K562 (cell line): ENCODE measurements at regions of chr9 and their contacts with region 1.

Region 1: DNA sequence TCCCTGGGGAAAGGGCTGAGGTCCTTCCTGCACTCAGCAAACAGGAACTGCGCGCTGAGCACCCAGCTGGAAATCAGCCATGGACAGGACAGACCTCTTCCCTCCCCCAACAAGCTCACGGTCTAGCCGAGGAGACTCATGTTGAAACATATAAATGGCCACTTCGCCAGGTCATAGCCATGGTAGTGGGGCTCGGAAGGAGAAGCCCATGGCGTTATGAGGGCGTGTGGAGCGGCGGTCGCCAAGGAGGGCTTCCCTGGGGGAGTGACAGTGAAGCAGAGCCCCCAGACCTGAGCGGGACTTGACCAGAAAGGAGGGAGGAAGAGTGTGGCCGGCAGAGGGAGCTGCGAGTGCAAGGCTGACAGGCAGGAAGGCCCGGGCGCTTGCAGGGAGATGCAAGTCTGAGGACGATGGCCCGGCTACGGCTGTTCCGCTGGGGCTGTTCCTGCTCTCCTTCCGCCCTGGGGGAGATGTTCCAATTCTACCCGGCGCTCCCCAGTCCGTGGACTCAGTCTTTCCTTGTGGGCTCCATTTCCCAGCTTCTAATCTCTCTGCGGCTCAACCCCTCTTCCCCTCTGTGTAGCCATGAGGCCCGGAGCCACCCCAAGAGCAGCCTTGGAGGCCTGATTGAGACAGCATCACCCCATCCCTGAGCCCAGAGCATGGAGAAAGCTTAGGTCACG is 43.9 kb upstream of the PRRC2B start:
- DNase-seq: peak; percentile 82 to 90 (median 86)
- ATAC-seq: peak; percentile 99
- H3K4me3 ChIP-seq: peak overlapping the region; percentile 29
- H3K27ac ChIP-seq: no peak overlapping the region; the same call in 2 of the 3 replicates
- H3K4me1 ChIP-seq: peaks cover 3 to 25% of the 10 kb centered on the region in 2 experiments; a peak in 4 of 5 replicates
- H3K27me3 ChIP-seq: no peaks in the 10 kb centered on the region
- CTCF ChIP-seq: peak; percentile 90 to 91 (median 91)
- EP300 ChIP-seq: no peak
- POLR2A ChIP-seq: no peak
- RAD21 ChIP-seq: peak; percentile 86 to 93

Region 2: DNA sequence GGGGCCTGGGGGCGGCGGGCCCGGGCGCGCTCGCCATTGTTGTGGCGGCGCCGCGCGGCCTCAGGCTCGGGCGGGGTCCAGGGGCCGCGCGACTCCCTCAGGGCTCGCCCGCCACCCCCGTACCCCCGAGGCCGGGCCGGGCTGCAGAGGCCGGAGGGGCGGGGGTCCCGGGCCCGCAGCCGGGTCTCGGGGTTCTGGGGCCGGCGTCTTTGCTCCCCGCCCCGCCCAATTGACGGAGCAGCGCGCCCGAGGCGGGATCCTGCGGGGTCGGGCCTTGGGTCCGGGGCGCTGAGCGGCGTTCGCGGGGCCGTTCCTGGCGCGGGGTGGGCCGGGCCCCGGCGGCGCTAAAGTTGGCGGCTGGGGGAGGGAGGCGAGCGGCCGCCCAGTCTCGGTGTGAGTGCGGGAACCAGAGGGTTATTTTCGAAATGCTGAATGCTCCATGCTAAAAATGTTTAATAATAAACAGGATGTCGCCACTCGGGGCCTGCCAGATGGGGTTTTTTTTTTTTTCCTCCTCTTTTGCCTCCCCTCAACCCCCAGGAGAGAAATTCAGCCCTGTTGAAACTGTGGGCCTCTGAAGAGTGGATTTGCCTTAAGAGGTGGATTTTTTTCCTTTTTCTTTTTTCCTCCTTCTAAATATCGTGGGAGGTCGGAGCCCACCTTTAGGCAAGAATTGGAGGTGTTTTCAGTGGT is 44.6 kb after region 1 on chr9:
- CTCF ChIA-PET with region 1: interaction called, 3 read pairs
- POLR2A ChIA-PET with region 1: interaction called, 10 read pairs
- in situ Hi-C with region 1: no loop called
- intact Hi-C with region 1: no loop called
- DNase-seq: peak; percentile 64 to 85 (median 80)
- ATAC-seq: peak; percentile 70
- H3K4me3 ChIP-seq: peak overlapping the region; percentile 96
- H3K27ac ChIP-seq: peak overlapping the region; percentile 89
- H3K4me1 ChIP-seq: peaks cover 26 to 33% of the 10 kb centered on the region in 2 experiments
- H3K27me3 ChIP-seq: no peaks in the 10 kb centered on the region
- CTCF ChIP-seq: no peak
- EP300 ChIP-seq: no peak
- POLR2A ChIP-seq: no peak; the same call in 1 of the 2 replicates
- RAD21 ChIP-seq: no peak

Region 3: DNA sequence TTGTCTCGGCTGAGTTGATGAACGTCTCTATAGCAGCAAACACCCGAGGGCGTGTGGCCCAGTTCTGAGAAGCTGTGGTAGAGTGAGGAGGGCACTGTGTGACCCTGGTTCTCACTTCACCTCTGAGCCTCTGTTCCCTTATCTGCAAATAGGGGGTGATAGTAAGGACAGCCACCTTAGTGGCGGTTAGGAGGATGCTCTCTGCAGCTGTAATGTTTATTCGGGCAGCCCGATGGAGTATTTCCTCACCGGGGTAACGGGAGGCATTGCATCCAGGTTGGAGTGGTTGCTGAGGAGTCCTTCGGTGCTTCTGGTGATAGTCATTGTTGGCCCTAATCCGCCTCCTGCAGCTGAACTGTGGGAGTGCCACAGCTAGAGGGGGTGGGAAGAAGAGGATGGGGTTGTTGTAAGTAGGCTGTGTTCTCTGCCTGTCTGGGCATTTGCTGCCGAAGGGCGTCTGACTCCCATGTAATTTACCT is 57.7 kb after region 1 on chr9:
- CTCF ChIA-PET with region 1: interaction called, 8 read pairs
- POLR2A ChIA-PET with region 1: interaction called, 8 read pairs
- in situ Hi-C with region 1: no loop called
- intact Hi-C with region 1: loop called (anchors 5 kb)
- DNase-seq: peak; percentile 34 to 61 (median 48)
- ATAC-seq: peak; percentile 77
- H3K4me3 ChIP-seq: no peak overlapping the region
- H3K27ac ChIP-seq: no peak overlapping the region
- H3K4me1 ChIP-seq: peaks cover 37 to 40% of the 10 kb centered on the region in 2 experiments; a peak in 4 of 5 replicates
- H3K27me3 ChIP-seq: no peaks in the 10 kb centered on the region
- CTCF ChIP-seq: peak; percentile 45 to 57 (median 53); a peak in 5 of 6 replicates
- EP300 ChIP-seq: no peak
- POLR2A ChIP-seq: no peak
- RAD21 ChIP-seq: peak in 1 of 2 experiments; percentile 14; a peak in 1 of 4 replicates

Region 4: DNA sequence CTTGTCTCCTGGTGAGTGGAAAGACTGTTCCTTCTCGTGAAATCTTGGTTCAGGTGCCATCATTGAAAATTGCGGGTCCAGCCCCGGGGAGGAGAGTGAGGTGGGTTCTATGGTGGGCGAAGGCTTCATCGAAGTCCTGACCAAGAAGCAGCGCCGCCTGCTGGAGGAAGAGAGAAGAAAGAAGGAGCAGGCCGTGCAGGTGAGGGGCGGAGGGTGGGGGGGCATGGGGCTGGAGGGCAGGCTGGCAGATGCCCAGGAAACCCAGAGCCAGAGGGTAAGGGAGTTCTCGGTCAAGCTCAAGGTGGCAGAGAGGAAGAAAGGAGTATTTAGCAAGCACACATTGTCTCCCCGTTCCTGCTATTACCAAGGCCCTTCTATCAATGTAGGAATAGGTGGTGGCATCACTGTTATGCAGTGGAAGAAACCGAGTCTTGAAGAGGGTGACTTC is 128.4 kb after region 1 on chr9:
- CTCF ChIA-PET with region 1: interaction called, 12 read pairs
- POLR2A ChIA-PET with region 1: interaction called, 3 read pairs
- in situ Hi-C with region 1: loop called (anchors 10 kb)
- intact Hi-C with region 1: loop called (anchors 5 kb)
- DNase-seq: peak; percentile 45 to 67 (median 60)
- ATAC-seq: peak; percentile 77
- H3K4me3 ChIP-seq: no peak overlapping the region
- H3K27ac ChIP-seq: no peak overlapping the region
- H3K4me1 ChIP-seq: peaks cover 0 to 7% of the 10 kb centered on the region in 2 experiments; a peak in 1 of 5 replicates
- H3K27me3 ChIP-seq: no peaks in the 10 kb centered on the region
- CTCF ChIP-seq: peak; percentile 50 to 62 (median 55); a peak in 5 of 6 replicates
- EP300 ChIP-seq: no peak
- POLR2A ChIP-seq: no peak
- RAD21 ChIP-seq: no peak; a peak in 1 of 4 replicates

Region 5: GRCh38 chr9:131747356-131747755 is 397.3 kb after region 1 on chr9:
- CTCF ChIA-PET with region 1: no interaction called
- POLR2A ChIA-PET with region 1: no interaction called
- in situ Hi-C with region 1: loop called (anchors 5 kb)
- intact Hi-C with region 1: loop called (anchors 2 kb)
- DNase-seq: peak in 2 of 4 experiments; percentile 34 to 64
- ATAC-seq: peak; percentile 79
- H3K4me3 ChIP-seq: no peak overlapping the region
- H3K27ac ChIP-seq: no peak overlapping the region
- H3K4me1 ChIP-seq: peaks cover 3 to 8% of the 10 kb centered on the region in 2 experiments; a peak in 2 of 5 replicates
- H3K27me3 ChIP-seq: peaks cover 4 to 24% of the 10 kb centered on the region in 2 experiments; a peak in 3 of 5 replicates
- CTCF ChIP-seq: peak; percentile 63 to 83 (median 66)
- EP300 ChIP-seq: no peak
- POLR2A ChIP-seq: no peak
- RAD21 ChIP-seq: peak; percentile 66 to 81